Gastrocnemius medialis (tissue), 4 donors: ENCODE measurements at regions of chr6 and their contacts with region 1.

Region 1: GRCh38 chr6:149863697-149864577 is at the start of gene LRP11:
- DNase-seq: peak; percentile 77 to 84
- ATAC-seq: peak; percentile 79
- H3K4me3 ChIP-seq: peak within 1 kb of the TSS; percentile 61 to 89 (median 72)
- H3K27ac ChIP-seq: peak within 1 kb of the TSS; percentile 87 to 96 (median 94)
- H3K4me1 ChIP-seq: peaks cover 15 to 26% of the 10 kb centered on the region in 2 donors
- H3K27me3 ChIP-seq: no peaks in the 10 kb centered on the region
- CTCF ChIP-seq: peak in 1 of 5 experiments; percentile 19
- POLR2A ChIP-seq: peak; percentile 90 to 93
- total RNA-seq, gene LRP11: 5.5 to 19.8 (median 6.1) TPM

Region 2: GRCh38 chr6:148557796-148558321 is 1306.1 kb before region 1 on chr6:
- in situ Hi-C with region 1: no loop called
- intact Hi-C with region 1: no loop called
- DNase-seq: no peak
- ATAC-seq: no peak
- H3K4me3 ChIP-seq: no peak overlapping the region
- H3K27ac ChIP-seq: no peak overlapping the region
- H3K4me1 ChIP-seq: no peaks in the 10 kb centered on the region
- H3K27me3 ChIP-seq: no peaks in the 10 kb centered on the region
- CTCF ChIP-seq: no peak
- POLR2A ChIP-seq: no peak

Region 3: GRCh38 chr6:149717588-149718458 is 146.1 kb before region 1 on chr6 and contains the start of gene LATS1:
- in situ Hi-C with region 1: no loop called
- intact Hi-C with region 1: loop called (anchors 1 kb)
- DNase-seq: peak; percentile 76 to 84
- ATAC-seq: peak; percentile 93
- H3K4me3 ChIP-seq: peak within 1 kb of the TSS; percentile 77 to 96 (median 92)
- H3K27ac ChIP-seq: peak within 1 kb of the TSS; percentile 95 to 98 (median 97)
- H3K4me1 ChIP-seq: peaks cover 26 to 33% of the 10 kb centered on the region in 2 donors
- H3K27me3 ChIP-seq: no peaks in the 10 kb centered on the region
- CTCF ChIP-seq: no peak
- POLR2A ChIP-seq: peak; percentile 61 to 71
- total RNA-seq, gene LATS1: 6.3 to 21.8 (median 14.4) TPM

Region 4: DNA sequence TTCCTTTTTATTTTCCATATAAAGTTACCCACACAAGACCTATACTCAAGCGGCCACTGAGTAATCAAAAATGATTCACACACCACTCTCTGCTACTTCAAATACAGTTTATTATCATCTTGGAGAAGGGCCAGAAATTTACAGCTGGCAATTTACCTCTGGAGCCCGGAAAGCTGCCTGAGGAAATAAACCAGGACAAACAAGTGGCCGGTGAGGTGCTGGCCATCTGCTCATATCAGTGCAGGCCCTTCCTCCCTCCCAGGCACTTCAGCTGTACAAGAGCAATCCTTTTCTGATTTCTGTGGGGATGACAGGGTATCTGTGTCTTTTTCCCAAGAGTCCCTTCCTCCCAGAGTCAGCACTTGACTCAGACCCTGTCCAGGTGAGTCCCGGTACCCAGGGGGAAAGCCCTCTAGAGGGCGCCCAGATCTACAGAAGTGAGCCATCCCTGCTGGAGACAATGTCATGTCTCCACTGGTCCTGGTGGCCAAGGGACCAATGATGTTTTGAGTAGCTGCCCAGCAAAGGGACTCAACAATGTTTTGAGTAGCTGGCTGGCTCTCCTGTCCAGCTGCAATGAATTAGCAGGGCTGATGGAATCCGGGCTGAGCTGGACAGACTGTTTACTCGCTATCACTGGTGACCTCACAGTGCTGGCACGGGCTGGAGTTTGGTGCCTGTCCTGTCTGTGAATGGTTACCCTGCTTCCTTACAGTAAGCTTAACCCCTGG is 23.4 kb before region 1 on chr6:
- in situ Hi-C with region 1: no loop called
- intact Hi-C with region 1: loop called (anchors 1 kb)
- DNase-seq: peak; percentile 68 to 81
- ATAC-seq: peak; percentile 87 to 94
- H3K4me3 ChIP-seq: no peak overlapping the region
- H3K27ac ChIP-seq: peak overlapping the region in 1 of 4 donors; percentile 17
- H3K4me1 ChIP-seq: peaks cover 6 to 9% of the 10 kb centered on the region in 2 donors
- H3K27me3 ChIP-seq: no peaks in the 10 kb centered on the region
- CTCF ChIP-seq: peak; percentile 38 to 78 (median 68)
- POLR2A ChIP-seq: no peak

Region 5: DNA sequence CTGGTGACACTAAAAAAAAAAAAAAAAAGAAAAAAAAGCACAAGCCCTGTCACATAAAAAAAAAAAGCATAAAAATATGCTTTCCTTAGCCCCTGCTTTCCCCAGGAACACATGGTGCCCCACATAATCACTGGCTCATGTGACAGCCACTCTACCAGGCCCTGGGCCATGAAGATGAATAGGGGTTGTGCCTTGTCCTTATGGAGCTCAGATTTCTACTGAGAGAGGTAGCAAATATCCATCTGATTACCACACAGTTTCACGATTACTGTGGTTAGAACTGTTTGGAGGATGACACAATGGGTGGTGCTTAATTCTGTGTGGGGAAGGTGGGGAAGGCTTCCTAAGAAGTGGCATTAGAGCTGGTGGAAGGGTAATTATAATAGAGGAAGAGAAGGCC is 24.7 kb after region 1 on chr6:
- in situ Hi-C with region 1: no loop called
- intact Hi-C with region 1: loop called (anchors 2 kb)
- DNase-seq: peak; percentile 70 to 75
- ATAC-seq: peak; percentile 93 to 97
- H3K4me3 ChIP-seq: no peak overlapping the region
- H3K27ac ChIP-seq: peak overlapping the region; percentile 66 to 80 (median 70)
- H3K4me1 ChIP-seq: peaks cover 30 to 38% of the 10 kb centered on the region in 2 donors
- H3K27me3 ChIP-seq: no peaks in the 10 kb centered on the region
- CTCF ChIP-seq: no peak
- POLR2A ChIP-seq: no peak